Activated CD4-positive, alpha-beta T cell treated with anti-CD3 and anti-CD28 coated beads, Interleukin-2, amount 10 ng/mL, durations not matched to agents 7 days and 5 days (primary cell): ENCODE measurements at regions of chr6 and their contacts with region 1.

Region 1: GRCh38 chr6:20401205-20402091 is at the start of gene E2F3:
- DNase-seq: peak; percentile 100
- H3K4me3 Mint-ChIP-seq: peak within 1 kb of the TSS; percentile 94
- H3K27ac Mint-ChIP-seq: peak within 1 kb of the TSS; percentile 99
- H3K4me1 Mint-ChIP-seq: peaks cover 44% of the 10 kb centered on the region
- H3K27me3 Mint-ChIP-seq: no peaks in the 10 kb centered on the region
- total RNA-seq, gene E2F3: 30.9 to 33.9 TPM

Region 2: DNA sequence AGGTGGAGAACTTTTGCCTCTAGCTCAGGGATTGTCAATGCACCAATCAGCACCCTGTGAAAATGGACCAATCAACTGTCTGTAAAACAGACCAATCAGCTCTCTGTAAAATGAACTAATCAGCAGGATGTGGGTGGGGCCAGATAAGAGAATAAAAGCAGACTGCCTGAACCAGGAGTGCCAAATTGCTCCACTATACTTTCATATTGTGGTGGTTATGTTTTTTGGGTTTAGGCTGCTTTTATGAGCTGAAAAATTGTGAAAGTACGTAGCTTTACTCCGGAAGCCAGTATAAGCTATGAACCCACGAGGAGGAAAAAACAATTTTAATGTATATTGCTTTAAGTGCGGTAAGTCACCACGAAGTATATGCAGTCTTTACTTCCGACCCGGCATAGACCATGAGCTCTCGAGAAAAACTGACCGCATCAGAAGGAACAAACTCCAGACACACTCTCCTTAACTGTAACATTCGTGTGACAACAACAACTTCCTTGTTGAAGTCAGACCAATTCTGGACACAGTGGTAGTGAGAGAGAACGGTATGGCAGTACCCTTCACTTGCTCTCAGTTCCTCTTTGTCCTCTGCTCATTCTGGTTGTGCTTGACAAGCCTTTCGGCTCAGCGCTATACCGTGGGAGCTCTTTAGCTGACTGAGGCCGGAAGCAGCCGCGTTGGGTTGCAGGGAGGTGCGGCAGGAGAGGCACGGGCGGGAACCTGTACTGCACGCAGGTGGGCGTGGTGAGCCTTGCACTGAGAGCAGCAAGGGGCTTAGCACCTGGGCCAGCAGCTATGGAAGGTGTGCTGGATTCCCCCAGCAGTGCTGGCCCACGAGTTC is 81.7 kb before region 1 on chr6:
- CTCF ChIA-PET with region 1: interaction called, 11 read pairs
- POLR2A ChIA-PET with region 1: interaction called, 30 read pairs
- DNase-seq: peak; percentile 88
- H3K4me3 Mint-ChIP-seq: peak overlapping the region; percentile 79
- H3K27ac Mint-ChIP-seq: peak overlapping the region; percentile 98
- H3K4me1 Mint-ChIP-seq: peaks cover 30% of the 10 kb centered on the region
- H3K27me3 Mint-ChIP-seq: no peaks in the 10 kb centered on the region

Region 3: DNA sequence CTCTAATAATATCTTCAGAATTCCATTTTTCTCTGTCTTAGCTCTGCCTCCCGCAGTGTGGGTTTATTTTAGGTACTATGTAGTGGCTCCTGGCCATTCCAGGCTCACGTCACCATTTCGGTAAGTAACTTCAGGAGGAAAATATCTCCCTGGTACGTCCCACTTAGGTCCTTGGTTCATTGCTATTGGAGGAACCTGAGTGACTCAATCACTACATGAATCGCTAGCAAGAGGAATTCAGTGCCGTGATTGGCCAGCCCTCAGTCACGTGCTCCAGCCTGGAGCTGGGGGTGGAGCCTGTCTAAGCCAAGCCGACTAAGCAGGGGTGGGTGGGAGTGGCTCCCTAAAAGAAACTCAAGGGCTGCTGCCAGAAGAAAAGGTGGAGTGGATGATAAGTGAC is 67.1 kb before region 1 on chr6:
- CTCF ChIA-PET with region 1: interaction called, 10 read pairs
- POLR2A ChIA-PET with region 1: no interaction called
- DNase-seq: no peak
- H3K4me3 Mint-ChIP-seq: no peak overlapping the region
- H3K27ac Mint-ChIP-seq: no peak overlapping the region
- H3K4me1 Mint-ChIP-seq: peaks cover 39% of the 10 kb centered on the region
- H3K27me3 Mint-ChIP-seq: no peaks in the 10 kb centered on the region

Region 4: GRCh38 chr6:20377623-20378265 is 23.7 kb before region 1 on chr6:
- CTCF ChIA-PET with region 1: interaction called, 10 read pairs
- POLR2A ChIA-PET with region 1: no interaction called
- DNase-seq: no peak
- H3K4me3 Mint-ChIP-seq: no peak overlapping the region
- H3K27ac Mint-ChIP-seq: no peak overlapping the region
- H3K4me1 Mint-ChIP-seq: peaks cover 25% of the 10 kb centered on the region
- H3K27me3 Mint-ChIP-seq: no peaks in the 10 kb centered on the region

Region 5: DNA sequence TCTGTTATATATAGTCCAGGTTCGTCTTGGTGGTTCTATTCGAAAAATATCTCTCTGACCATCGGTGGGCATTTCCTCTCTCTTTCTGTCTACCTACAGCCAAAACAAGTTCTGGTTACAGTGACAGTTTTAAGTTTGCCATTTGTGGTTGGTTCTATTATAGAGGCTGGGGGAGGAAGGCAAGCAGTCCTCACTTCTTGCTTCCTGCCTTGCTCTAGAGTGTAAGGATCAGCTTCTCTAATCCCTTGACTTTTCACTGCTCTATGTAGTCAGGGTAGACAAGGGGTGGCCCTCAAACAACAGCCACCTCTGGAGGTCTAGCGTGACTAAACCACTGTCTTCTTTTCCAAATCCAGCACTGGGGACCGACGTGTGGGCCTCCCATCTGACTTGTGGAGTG is 16.4 kb after region 1 on chr6:
- CTCF ChIA-PET with region 1: interaction called, 11 read pairs
- POLR2A ChIA-PET with region 1: interaction called, 3 read pairs
- DNase-seq: no peak
- H3K4me3 Mint-ChIP-seq: no peak overlapping the region
- H3K27ac Mint-ChIP-seq: no peak overlapping the region
- H3K4me1 Mint-ChIP-seq: peaks cover 60% of the 10 kb centered on the region
- H3K27me3 Mint-ChIP-seq: no peaks in the 10 kb centered on the region

Region 6: DNA sequence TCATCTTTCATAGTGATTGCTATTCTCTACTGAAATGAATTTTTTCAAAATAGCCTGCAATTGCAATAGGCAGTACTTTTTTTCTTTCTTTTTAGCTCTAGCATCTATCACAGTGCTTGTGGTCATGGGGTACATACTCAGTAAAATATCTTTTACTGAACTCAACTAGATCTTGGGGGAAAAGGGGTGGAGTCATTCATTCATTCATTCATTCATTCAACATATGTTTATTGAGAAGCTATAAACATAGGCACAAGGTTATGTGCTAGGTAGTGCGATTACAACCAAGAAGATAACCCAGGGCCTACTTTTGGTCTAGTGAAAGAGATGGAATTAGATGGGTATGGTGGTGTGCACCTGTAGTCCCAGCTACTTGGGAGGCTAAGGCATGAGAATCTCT is 131.4 kb after region 1 on chr6:
- CTCF ChIA-PET with region 1: interaction called, 14 read pairs
- POLR2A ChIA-PET with region 1: interaction called, 4 read pairs
- DNase-seq: no peak
- H3K4me3 Mint-ChIP-seq: no peak overlapping the region
- H3K27ac Mint-ChIP-seq: no peak overlapping the region
- H3K4me1 Mint-ChIP-seq: peaks cover 53% of the 10 kb centered on the region
- H3K27me3 Mint-ChIP-seq: peaks cover 3% of the 10 kb centered on the region